ENCODE measurements at regions of chrX and their contacts with region 1.

Region 1: GRCh38 chrX:119266364-119266995 is 30.4 kb downstream of the PGRMC1 start:
- DNase-seq: no peak
- H3K4me3 ChIP-seq: no peak overlapping the region
- H3K27ac ChIP-seq: no peak overlapping the region
- H3K4me1 ChIP-seq: no peaks in the 10 kb centered on the region
- H3K27me3 ChIP-seq: no peaks in the 10 kb centered on the region
- CTCF ChIP-seq: peak; percentile 42 to 59 (median 53)
- EP300 ChIP-seq: no peak
- POLR2A ChIP-seq: no peak
- RAD21 ChIP-seq: peak; percentile 40 to 50

Region 2: DNA sequence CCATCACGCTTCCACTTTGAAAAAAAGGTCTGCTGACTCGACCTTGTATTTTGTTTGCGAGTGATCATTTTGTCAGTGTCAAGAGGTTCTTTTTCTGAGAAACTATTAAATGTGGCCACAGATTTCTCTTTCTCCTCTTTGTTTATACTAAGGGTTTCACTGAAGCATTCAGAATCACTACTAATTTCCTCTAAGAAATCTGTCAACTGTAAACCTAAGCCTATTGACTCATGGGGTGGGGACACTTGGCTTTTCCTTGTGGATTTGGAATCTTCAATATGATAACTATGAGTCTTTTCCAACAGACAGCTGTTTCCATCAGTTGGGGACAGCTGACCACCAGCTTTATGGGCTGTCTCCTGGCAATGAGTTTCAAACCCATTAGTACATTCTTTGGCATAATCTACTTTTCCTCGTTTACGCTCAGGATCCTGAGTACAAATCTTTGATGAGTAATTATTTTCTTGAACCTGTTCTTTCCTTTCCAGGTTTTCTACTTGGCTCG is 16.6 kb before region 1 on chrX:
- CTCF ChIA-PET with region 1: interaction called, 11 read pairs
- POLR2A ChIA-PET with region 1: no interaction called
- DNase-seq: no peak
- H3K4me3 ChIP-seq: no peak overlapping the region
- H3K27ac ChIP-seq: no peak overlapping the region
- H3K4me1 ChIP-seq: no peaks in the 10 kb centered on the region
- H3K27me3 ChIP-seq: no peaks in the 10 kb centered on the region
- CTCF ChIP-seq: no peak
- EP300 ChIP-seq: no peak
- POLR2A ChIP-seq: no peak
- RAD21 ChIP-seq: no peak

Region 3: DNA sequence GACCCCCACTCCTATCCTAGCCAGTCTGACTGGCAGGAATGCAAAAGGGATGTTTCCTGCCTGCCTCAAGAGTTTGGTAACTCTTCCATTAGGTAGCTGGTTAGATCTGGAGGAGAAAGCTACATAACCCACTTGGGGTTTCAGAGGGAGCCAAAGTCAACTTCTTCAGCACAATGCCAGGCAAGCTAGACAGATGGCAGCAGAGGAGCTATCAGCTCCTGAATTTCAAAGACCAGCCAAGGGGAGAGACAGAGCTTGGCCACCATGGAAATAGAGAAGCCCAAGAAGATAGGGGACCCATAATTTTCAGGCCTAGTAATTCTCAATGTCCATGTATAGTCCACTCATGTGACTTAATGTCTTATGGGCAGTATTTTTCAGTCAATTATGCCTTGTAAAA is 26.0 kb after region 1 on chrX:
- CTCF ChIA-PET with region 1: no interaction called
- POLR2A ChIA-PET with region 1: no interaction called
- DNase-seq: no peak
- H3K4me3 ChIP-seq: no peak overlapping the region
- H3K27ac ChIP-seq: no peak overlapping the region
- H3K4me1 ChIP-seq: no peaks in the 10 kb centered on the region
- H3K27me3 ChIP-seq: no peaks in the 10 kb centered on the region
- CTCF ChIP-seq: peak in 1 of 3 experiments; percentile 36; a peak in 1 of 4 replicates
- EP300 ChIP-seq: no peak
- POLR2A ChIP-seq: no peak
- RAD21 ChIP-seq: peak; percentile 23 to 50; a peak in 2 of 4 replicates

Measured in H1 (cell line).